ENCODE measurements at regions of chr4 and their contacts with region 1.

Region 1: DNA sequence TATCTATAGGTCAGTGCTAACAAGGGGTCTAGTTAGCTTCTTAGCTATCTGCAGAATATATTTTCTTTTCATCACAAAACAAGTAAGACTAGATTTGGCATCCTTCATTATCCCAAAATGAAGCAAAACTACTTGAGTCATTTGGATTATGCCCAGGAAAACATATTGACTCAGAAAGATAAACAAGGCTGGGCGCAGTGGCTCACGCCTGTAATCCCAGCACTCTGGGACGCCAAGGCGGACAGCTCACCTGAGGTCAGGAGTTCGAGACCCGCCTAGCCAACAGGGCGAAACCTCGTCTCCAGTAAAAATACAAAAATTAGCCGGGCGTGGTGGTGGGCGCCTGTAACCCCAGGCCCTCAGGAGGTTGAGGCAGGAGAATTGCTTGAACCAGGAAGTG is 18.0 kb upstream of the MND1 start:
- DNase-seq: peak in 1 of 3 donors; percentile 31
- ATAC-seq: peak in 1 of 4 donors; percentile 61
- H3K4me3 ChIP-seq: no peak overlapping the region
- H3K27ac ChIP-seq: no peak overlapping the region
- H3K4me1 ChIP-seq: no peaks in the 10 kb centered on the region
- H3K27me3 ChIP-seq: no peaks in the 10 kb centered on the region
- CTCF ChIP-seq: no peak
- POLR2A ChIP-seq: no peak

Region 2: DNA sequence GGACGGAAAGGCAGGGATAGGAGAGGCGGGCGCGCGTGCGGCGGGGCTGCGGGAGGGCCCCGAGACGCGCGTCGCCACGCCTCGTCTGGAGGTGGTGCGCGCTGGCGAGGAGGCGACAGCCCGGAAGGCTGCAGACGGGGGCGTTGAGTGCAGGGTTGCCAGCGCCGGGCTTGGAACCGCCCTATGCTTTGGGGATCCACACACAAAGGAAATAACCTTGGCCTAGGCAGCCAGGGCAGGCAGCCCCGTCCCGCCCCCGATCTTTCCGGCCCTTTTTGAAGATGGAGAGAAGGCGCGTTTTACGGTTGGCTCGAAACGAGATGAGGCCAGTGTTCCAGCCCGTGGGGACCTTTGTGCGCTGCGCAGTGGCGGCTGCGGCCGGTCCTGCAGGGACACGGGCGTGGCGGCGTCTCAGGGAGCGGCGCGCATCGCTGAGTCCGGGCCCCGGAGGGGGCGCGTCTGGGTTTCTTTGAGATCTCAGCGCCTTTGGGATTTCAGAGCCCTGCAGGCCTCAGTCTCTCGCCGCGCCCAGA is 173.1 kb before region 1 on chr4:
- intact Hi-C with region 1: loop called in 1 of 2 experiments (anchors 10 kb)
- DNase-seq: peak in 1 of 3 donors; percentile 45
- ATAC-seq: peak; percentile 69 to 81 (median 75)
- H3K4me3 ChIP-seq: peak overlapping the region; percentile 31 to 52 (median 44)
- H3K27ac ChIP-seq: no peak overlapping the region
- H3K4me1 ChIP-seq: peaks cover 0 to 19% (median 7%) of the 10 kb centered on the region in 4 donors
- H3K27me3 ChIP-seq: no peaks in the 10 kb centered on the region
- CTCF ChIP-seq: no peak
- POLR2A ChIP-seq: no peak